ENCODE measurements at regions of chr1 and their contacts with region 1.

Region 1: GRCh38 chr1:163357378-163357777 is 35.6 kb downstream of the NUF2 start:
- DNase-seq: no peak
- ATAC-seq: no peak
- H3K4me3 ChIP-seq: no peak overlapping the region
- H3K4me3 Mint-ChIP-seq: no peak overlapping the region
- H3K27ac ChIP-seq: no peak overlapping the region
- H3K27ac Mint-ChIP-seq: no peak overlapping the region
- H3K4me1 ChIP-seq: peaks cover 0 to 5% of the 10 kb centered on the region in 2 donors
- H3K4me1 Mint-ChIP-seq: peaks cover 7% of the 10 kb centered on the region
- H3K27me3 ChIP-seq: no peaks in the 10 kb centered on the region
- H3K27me3 Mint-ChIP-seq: peaks cover 3% of the 10 kb centered on the region
- CTCF ChIP-seq: no peak

Region 2: DNA sequence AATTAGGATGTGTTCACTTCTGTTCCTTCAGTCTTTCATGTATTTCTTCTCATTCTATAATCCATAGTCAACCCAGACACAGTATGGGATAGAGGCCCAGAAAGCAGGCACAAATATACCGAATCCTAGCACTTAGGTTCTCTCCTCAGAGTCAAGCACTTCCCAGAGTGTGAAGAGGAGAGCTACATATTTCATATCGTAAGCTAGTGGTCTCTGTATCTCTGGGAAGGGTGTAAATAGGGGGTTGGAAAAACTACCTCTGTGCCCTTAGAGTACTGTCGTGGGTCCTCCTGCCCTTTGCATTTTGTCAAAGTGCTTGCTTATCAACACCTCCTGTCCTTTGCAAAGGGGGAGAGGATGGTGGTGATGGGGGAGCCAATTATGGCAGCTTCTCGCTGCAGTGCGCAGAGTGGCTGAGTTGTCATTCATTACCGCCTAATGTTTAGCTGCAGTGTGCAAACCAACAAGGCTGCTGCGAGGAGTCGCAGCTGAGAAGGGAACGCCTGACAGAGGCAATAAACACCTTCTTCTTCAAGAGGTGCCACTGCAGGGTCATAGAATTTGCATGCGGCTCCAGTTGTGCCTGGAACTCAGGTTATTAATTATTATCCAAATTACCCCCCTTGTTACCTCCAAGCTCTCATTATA is 147.1 kb after region 1 on chr1:
- CTCF ChIA-PET with region 1: no interaction called
- POLR2A ChIA-PET with region 1: no interaction called
- intact Hi-C with region 1: no loop called
- DNase-seq: no peak
- ATAC-seq: no peak
- H3K4me3 ChIP-seq: no peak overlapping the region
- H3K4me3 Mint-ChIP-seq: no peak overlapping the region
- H3K27ac ChIP-seq: no peak overlapping the region
- H3K27ac Mint-ChIP-seq: no peak overlapping the region
- H3K4me1 ChIP-seq: no peaks in the 10 kb centered on the region
- H3K4me1 Mint-ChIP-seq: no peaks in the 10 kb centered on the region
- H3K27me3 ChIP-seq: no peaks in the 10 kb centered on the region
- H3K27me3 Mint-ChIP-seq: no peaks in the 10 kb centered on the region
- CTCF ChIP-seq: no peak

Region 3: DNA sequence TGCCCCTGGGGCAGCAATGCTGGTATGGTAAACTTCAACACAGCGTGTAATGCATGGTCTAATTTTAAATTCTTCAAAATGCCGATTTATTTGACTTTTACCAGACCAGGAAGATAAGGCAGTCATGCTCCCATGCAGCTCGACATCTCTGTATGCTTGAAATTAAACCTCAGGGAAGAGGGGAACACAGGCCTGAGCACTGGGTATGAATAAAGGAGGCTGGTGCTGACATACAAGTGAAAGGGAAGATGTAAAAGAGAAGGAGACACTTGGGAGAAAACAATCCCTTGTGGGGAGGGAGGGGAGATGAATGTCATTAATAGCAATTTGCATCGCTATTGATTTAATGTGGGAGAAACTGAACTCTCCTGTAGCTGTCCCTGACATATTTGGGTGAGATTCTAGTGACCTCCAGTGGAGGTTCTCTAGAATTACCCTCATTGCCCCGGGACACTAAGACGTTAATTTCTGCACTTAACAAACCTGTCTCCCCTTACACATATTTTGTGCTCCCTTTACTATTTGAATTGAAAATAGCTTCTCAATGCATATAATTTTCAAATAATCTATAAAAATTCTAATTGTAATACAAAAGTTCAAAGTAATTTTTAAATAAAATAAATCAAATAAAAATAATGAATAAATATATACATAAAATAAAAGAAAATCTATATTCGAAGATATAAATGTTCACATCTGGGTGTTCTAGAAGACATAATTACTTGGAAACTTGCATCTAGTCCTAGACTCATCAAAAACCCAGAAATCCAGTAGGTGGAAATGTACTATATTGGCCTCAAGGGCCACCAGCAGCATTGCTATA is 1716.0 kb after region 1 on chr1:
- CTCF ChIA-PET with region 1: no interaction called
- POLR2A ChIA-PET with region 1: no interaction called
- intact Hi-C with region 1: loop called (anchors 5 kb)
- DNase-seq: no peak
- ATAC-seq: no peak
- H3K4me3 ChIP-seq: no peak overlapping the region
- H3K4me3 Mint-ChIP-seq: no peak overlapping the region
- H3K27ac ChIP-seq: no peak overlapping the region
- H3K27ac Mint-ChIP-seq: no peak overlapping the region
- H3K4me1 ChIP-seq: no peaks in the 10 kb centered on the region
- H3K4me1 Mint-ChIP-seq: no peaks in the 10 kb centered on the region
- H3K27me3 ChIP-seq: no peaks in the 10 kb centered on the region
- H3K27me3 Mint-ChIP-seq: peaks cover 4% of the 10 kb centered on the region
- CTCF ChIP-seq: peak; percentile 43